Body of pancreas (tissue), 4 donors: ENCODE measurements at regions of chr2 and their contacts with region 1.

Region 1: GRCh38 chr2:157789933-157790511 is 86.1 kb downstream of the ACVR1 start:
- DNase-seq: peak; percentile 71 to 88 (median 80)
- ATAC-seq: peak; percentile 94
- H3K4me3 ChIP-seq: no peak overlapping the region
- H3K27ac ChIP-seq: peak overlapping the region; percentile 44 to 62 (median 46)
- H3K4me1 ChIP-seq: peaks cover 37% of the 10 kb centered on the region
- H3K27me3 ChIP-seq: no peaks in the 10 kb centered on the region
- CTCF ChIP-seq: no peak
- POLR2A ChIP-seq: no peak

Region 2: GRCh38 chr2:157876066-157876787 is 86.2 kb after region 1 on chr2 and contains the start of gene ACVR1:
- intact Hi-C with region 1: loop called (anchors 10 kb)
- DNase-seq: peak; percentile 95 to 98 (median 97)
- ATAC-seq: peak; percentile 94
- H3K4me3 ChIP-seq: peak within 1 kb of the TSS; percentile 40 to 61
- H3K27ac ChIP-seq: peak within 1 kb of the TSS; percentile 97 to 99 (median 98)
- H3K4me1 ChIP-seq: peaks cover 51% of the 10 kb centered on the region
- H3K27me3 ChIP-seq: no peaks in the 10 kb centered on the region
- CTCF ChIP-seq: peak in 6 of 7 experiments; percentile 20 to 88 (median 45)
- POLR2A ChIP-seq: peak; percentile 68 to 83 (median 79)
- total RNA-seq, gene ACVR1: 14.0 to 18.5 TPM